ENCODE measurements at regions of chr10 and their contacts with region 1.

Region 1: GRCh38 chr10:52644373-52645186 is 128.0 kb downstream of the MBL2 start:
- DNase-seq: peak; percentile 97
- ATAC-seq: peak; percentile 83
- H3K4me3 ChIP-seq: peak overlapping the region; percentile 18; the same call in 1 of the 2 replicates
- H3K27ac ChIP-seq: no peak overlapping the region
- H3K4me1 ChIP-seq: peaks cover 15% of the 10 kb centered on the region
- H3K27me3 ChIP-seq: no peaks in the 10 kb centered on the region
- CTCF ChIP-seq: peak; percentile 100

Region 2: GRCh38 chr10:52308251-52309031 is 336.1 kb before region 1 on chr10:
- CTCF ChIA-PET with region 1: interaction called, 8 read pairs
- POLR2A ChIA-PET with region 1: no interaction called
- intact Hi-C with region 1: loop called (anchors 1 kb)
- DNase-seq: peak; percentile 94
- ATAC-seq: peak; percentile 86
- H3K4me3 ChIP-seq: peak overlapping the region; percentile 55
- H3K27ac ChIP-seq: 0 out of 2 replicates have a peak overlapping the region, but pooled peaks have one; percentile 2
- H3K4me1 ChIP-seq: peaks cover 36% of the 10 kb centered on the region
- H3K27me3 ChIP-seq: no peaks in the 10 kb centered on the region
- CTCF ChIP-seq: peak; percentile 99

Region 3: GRCh38 chr10:52368741-52369140 is 275.8 kb before region 1 on chr10:
- CTCF ChIA-PET with region 1: no interaction called
- POLR2A ChIA-PET with region 1: no interaction called
- intact Hi-C with region 1: no loop called
- DNase-seq: no peak
- ATAC-seq: peak; percentile 33
- H3K4me3 ChIP-seq: no peak overlapping the region
- H3K27ac ChIP-seq: no peak overlapping the region
- H3K4me1 ChIP-seq: no peaks in the 10 kb centered on the region
- H3K27me3 ChIP-seq: no peaks in the 10 kb centered on the region
- CTCF ChIP-seq: peak; percentile 56

Measured in PC-3 (cell line).